ENCODE measurements at regions of chr12 and their contacts with region 1.

Region 1: DNA sequence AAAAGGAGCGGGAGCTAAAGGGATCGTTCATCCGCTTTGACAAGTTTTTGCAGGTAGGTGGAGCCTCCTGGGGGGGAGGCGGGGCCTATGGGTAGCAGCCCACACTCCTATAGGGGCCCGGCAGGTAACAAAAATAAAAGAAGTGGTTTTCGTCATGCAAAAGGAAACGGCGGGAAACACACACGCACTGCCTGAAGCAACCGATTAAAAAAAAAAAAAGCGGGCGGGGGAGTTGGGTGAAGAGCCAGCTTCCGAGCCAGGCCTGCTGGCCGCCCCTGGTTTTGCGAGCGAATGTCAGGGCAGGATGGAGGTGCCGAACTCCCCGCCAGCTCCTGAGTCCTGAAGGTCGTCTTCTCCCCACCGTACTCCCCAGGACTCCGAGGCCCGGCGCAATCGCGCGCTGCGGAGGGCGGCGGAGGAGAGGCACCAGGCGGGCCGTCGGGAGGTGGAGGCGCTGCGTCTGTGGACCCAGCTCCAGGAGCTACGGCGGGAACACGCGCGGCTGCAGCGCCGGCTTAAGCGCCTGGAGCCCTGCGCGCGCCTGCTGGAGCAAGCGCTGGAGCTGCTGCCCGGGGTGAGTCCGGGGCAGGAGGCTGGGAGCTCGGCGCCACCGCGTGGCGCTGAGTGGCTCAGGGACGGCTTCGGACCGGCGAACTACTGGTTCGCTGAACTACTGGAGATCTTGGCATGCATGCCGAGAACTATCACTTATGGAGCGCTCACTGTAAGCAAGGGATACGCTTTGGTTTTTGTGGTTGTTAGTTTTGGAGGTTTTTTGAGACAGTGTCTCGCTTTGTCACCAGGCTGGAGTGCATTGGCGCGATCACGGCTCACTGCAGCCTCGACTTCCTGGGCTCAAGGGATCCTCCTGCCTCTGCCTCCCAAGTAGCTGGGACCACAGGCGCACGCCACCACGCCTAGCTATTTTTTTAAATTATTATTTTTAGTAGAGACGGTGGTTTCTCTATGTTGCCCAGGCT is 3.6 kb downstream of the CFAP73 start:
- DNase-seq: peak; percentile 75 to 85
- H3K4me3 ChIP-seq: peak overlapping the region; percentile 36
- H3K4me3 Mint-ChIP-seq: peak overlapping the region; percentile 63
- H3K27ac Mint-ChIP-seq: peak overlapping the region; percentile 48
- H3K4me1 ChIP-seq: peaks cover 13% of the 10 kb centered on the region
- H3K4me1 Mint-ChIP-seq: no peaks in the 10 kb centered on the region
- H3K27me3 ChIP-seq: peaks cover 3% of the 10 kb centered on the region; the same call in 1 of the 2 replicates
- H3K27me3 Mint-ChIP-seq: peaks cover 10% of the 10 kb centered on the region
- CTCF ChIP-seq: peak; percentile 34 to 75

Region 2: GRCh38 chr12:112992541-112993398 is 160.4 kb before region 1 on chr12:
- CTCF ChIA-PET with region 1: interaction called, 16 read pairs
- POLR2A ChIA-PET with region 1: no interaction called
- intact Hi-C with region 1: loop called (anchors 2 kb)
- DNase-seq: peak; percentile 56 to 67
- H3K4me3 ChIP-seq: no peak overlapping the region
- H3K4me3 Mint-ChIP-seq: no peak overlapping the region
- H3K27ac Mint-ChIP-seq: no peak overlapping the region
- H3K4me1 ChIP-seq: no peaks in the 10 kb centered on the region
- H3K4me1 Mint-ChIP-seq: peaks cover 6% of the 10 kb centered on the region
- H3K27me3 ChIP-seq: no peaks in the 10 kb centered on the region
- H3K27me3 Mint-ChIP-seq: no peaks in the 10 kb centered on the region
- CTCF ChIP-seq: peak; percentile 77 to 83

Region 3: GRCh38 chr12:113048716-113049127 is 104.4 kb before region 1 on chr12:
- CTCF ChIA-PET with region 1: interaction called, 8 read pairs
- POLR2A ChIA-PET with region 1: no interaction called
- intact Hi-C with region 1: loop called (anchors 1 kb)
- DNase-seq: peak; percentile 52 to 71
- H3K4me3 ChIP-seq: no peak overlapping the region
- H3K4me3 Mint-ChIP-seq: no peak overlapping the region
- H3K27ac Mint-ChIP-seq: no peak overlapping the region
- H3K4me1 ChIP-seq: no peaks in the 10 kb centered on the region
- H3K4me1 Mint-ChIP-seq: no peaks in the 10 kb centered on the region
- H3K27me3 ChIP-seq: no peaks in the 10 kb centered on the region
- H3K27me3 Mint-ChIP-seq: peaks cover 10% of the 10 kb centered on the region
- CTCF ChIP-seq: peak; percentile 74 to 80

Region 4: GRCh38 chr12:113114447-113115178 is 38.5 kb before region 1 on chr12:
- CTCF ChIA-PET with region 1: no interaction called
- POLR2A ChIA-PET with region 1: no interaction called
- intact Hi-C with region 1: no loop called
- DNase-seq: no peak
- H3K4me3 ChIP-seq: no peak overlapping the region
- H3K4me3 Mint-ChIP-seq: no peak overlapping the region
- H3K27ac Mint-ChIP-seq: no peak overlapping the region
- H3K4me1 ChIP-seq: no peaks in the 10 kb centered on the region
- H3K4me1 Mint-ChIP-seq: no peaks in the 10 kb centered on the region
- H3K27me3 ChIP-seq: no peaks in the 10 kb centered on the region
- H3K27me3 Mint-ChIP-seq: peaks cover 4% of the 10 kb centered on the region
- CTCF ChIP-seq: no peak

Region 5: GRCh38 chr12:113174461-113175384 is 21.6 kb after region 1 on chr12:
- CTCF ChIA-PET with region 1: interaction called, 15 read pairs
- POLR2A ChIA-PET with region 1: no interaction called
- intact Hi-C with region 1: no loop called
- DNase-seq: peak; percentile 74 to 83
- H3K4me3 ChIP-seq: no peak overlapping the region
- H3K4me3 Mint-ChIP-seq: no peak overlapping the region
- H3K27ac Mint-ChIP-seq: peak overlapping the region; percentile 48
- H3K4me1 ChIP-seq: no peaks in the 10 kb centered on the region
- H3K4me1 Mint-ChIP-seq: no peaks in the 10 kb centered on the region
- H3K27me3 ChIP-seq: no peaks in the 10 kb centered on the region
- H3K27me3 Mint-ChIP-seq: no peaks in the 10 kb centered on the region
- CTCF ChIP-seq: peak; percentile 91 to 96

Measured in Caco-2 (cell line).